ENCODE measurements at regions of chr3 and their contacts with region 1.

Region 1: GRCh38 chr3:126752303-126752842 is 48.3 kb downstream of the CHCHD6 start:
- DNase-seq: peak; percentile 74
- ATAC-seq: peak; percentile 98
- H3K4me3 ChIP-seq: no peak overlapping the region
- H3K27ac ChIP-seq: no peak overlapping the region
- H3K4me1 ChIP-seq: no peaks in the 10 kb centered on the region
- H3K27me3 ChIP-seq: no peaks in the 10 kb centered on the region
- CTCF ChIP-seq: peak; percentile 85

Region 2: DNA sequence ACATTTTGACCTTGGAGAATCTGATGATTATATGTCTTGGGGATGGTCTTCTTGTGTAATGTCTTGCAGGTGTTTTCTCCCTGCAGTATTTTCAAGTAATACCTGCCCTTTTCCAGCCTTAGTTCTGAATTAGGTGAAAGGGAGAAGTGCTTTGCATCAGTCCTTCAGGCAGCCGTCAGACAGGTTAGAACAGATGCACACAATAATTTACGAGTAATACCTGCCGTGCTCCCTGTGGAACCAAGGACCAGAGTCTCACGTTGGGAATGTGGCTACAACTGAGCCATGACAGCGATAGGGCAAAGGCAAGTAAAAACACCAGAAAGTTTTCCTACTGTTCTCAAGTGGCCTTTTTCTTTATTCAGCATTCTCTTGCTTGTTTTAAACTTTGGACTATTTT is 20.8 kb after region 1 on chr3:
- CTCF ChIA-PET with region 1: interaction called, 16 read pairs
- POLR2A ChIA-PET with region 1: no interaction called
- intact Hi-C with region 1: no loop called
- DNase-seq: peak; percentile 57
- ATAC-seq: peak; percentile 42
- H3K4me3 ChIP-seq: no peak overlapping the region
- H3K27ac ChIP-seq: peak overlapping the region; percentile 59
- H3K4me1 ChIP-seq: peaks cover 25% of the 10 kb centered on the region
- H3K27me3 ChIP-seq: no peaks in the 10 kb centered on the region
- CTCF ChIP-seq: no peak

Region 3: DNA sequence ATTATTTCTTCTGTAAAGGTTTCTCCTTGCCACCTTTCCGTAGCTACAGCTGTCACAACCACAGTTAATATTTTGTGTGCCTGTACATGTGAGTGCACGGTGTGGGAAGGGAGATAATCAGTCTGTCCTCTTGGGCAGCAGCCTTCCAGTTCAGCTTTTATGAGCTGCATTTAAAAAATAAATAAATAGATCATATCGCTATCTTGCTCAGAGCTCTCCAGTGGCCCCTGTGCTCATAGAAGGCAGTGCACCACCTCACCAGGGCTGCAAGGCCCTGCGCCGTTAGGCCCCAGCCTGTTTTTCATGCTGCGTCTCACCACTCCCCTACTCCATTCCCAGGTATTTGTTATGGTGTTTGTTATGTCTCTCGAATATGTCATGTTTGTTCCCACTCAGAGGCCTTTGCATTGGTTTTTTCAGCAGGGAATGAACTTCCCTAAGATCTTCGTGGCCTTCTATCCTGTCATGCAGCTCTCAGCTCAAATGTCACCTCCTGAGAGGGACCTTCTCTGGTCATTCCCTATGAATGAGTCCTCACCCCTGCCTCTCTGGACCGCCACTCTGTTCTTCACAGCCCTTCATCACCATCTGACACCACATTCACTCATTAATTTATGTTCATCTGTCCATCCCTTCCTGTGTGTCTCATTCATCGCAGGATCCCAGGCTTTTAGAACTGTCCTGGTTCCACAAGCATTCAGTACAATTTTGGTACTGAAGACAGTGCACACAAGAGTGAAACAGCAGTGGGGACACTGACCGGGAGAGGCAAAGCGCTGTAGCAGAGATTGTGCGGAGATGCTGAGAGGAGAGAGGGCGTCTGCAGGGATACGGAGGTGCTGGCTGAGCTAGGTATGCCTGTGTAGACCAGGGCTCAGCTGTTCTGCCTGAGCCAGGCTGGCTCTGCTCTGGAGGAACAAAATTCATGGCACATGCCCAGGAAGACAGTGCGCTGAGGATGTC is 83.8 kb after region 1 on chr3:
- CTCF ChIA-PET with region 1: no interaction called
- POLR2A ChIA-PET with region 1: no interaction called
- intact Hi-C with region 1: loop called (anchors 5 kb)
- DNase-seq: peak; percentile 7
- ATAC-seq: peak; percentile 72
- H3K4me3 ChIP-seq: no peak overlapping the region
- H3K27ac ChIP-seq: peak overlapping the region; percentile 61
- H3K4me1 ChIP-seq: peaks cover 17% of the 10 kb centered on the region
- H3K27me3 ChIP-seq: no peaks in the 10 kb centered on the region
- CTCF ChIP-seq: no peak

Region 4: GRCh38 chr3:126886217-126886616 is 133.8 kb after region 1 on chr3:
- CTCF ChIA-PET with region 1: no interaction called
- POLR2A ChIA-PET with region 1: no interaction called
- intact Hi-C with region 1: no loop called
- DNase-seq: no peak
- ATAC-seq: peak; percentile 94
- H3K4me3 ChIP-seq: no peak overlapping the region
- H3K27ac ChIP-seq: no peak overlapping the region
- H3K4me1 ChIP-seq: no peaks in the 10 kb centered on the region
- H3K27me3 ChIP-seq: no peaks in the 10 kb centered on the region
- CTCF ChIP-seq: no peak

Region 5: GRCh38 chr3:126961191-126961790 is 208.9 kb after region 1 on chr3:
- CTCF ChIA-PET with region 1: no interaction called
- POLR2A ChIA-PET with region 1: no interaction called
- intact Hi-C with region 1: loop called (anchors 2 kb)
- DNase-seq: peak; percentile 75
- ATAC-seq: peak; percentile 67
- H3K4me3 ChIP-seq: no peak overlapping the region
- H3K27ac ChIP-seq: peak overlapping the region; percentile 89
- H3K4me1 ChIP-seq: peaks cover 37% of the 10 kb centered on the region
- H3K27me3 ChIP-seq: no peaks in the 10 kb centered on the region
- CTCF ChIP-seq: no peak

Region 6: GRCh38 chr3:126982471-126983175 is 230.2 kb after region 1 on chr3 and contains the start of gene PLXNA1:
- CTCF ChIA-PET with region 1: interaction called, 5 read pairs
- POLR2A ChIA-PET with region 1: no interaction called
- intact Hi-C with region 1: loop called (anchors 2 kb)
- DNase-seq: peak; percentile 77
- ATAC-seq: peak; percentile 74
- H3K4me3 ChIP-seq: peak within 1 kb of the TSS; percentile 83
- H3K27ac ChIP-seq: peak within 1 kb of the TSS; percentile 30; the same call in 1 of the 2 replicates
- H3K4me1 ChIP-seq: peaks cover 7% of the 10 kb centered on the region
- H3K27me3 ChIP-seq: no peaks in the 10 kb centered on the region
- CTCF ChIP-seq: peak; percentile 71
- total RNA-seq, gene PLXNA1: 30.0 and 38.0 TPM in 2 replicates

Region 7: GRCh38 chr3:127172781-127173515 is 420.6 kb after region 1 on chr3:
- CTCF ChIA-PET with region 1: no interaction called
- POLR2A ChIA-PET with region 1: no interaction called
- intact Hi-C with region 1: loop called (anchors 10 kb)
- DNase-seq: peak; percentile 38
- ATAC-seq: peak; percentile 37
- H3K4me3 ChIP-seq: no peak overlapping the region
- H3K27ac ChIP-seq: no peak overlapping the region
- H3K4me1 ChIP-seq: peaks cover 4% of the 10 kb centered on the region; the same call in 1 of the 2 replicates
- H3K27me3 ChIP-seq: peaks cover 23% of the 10 kb centered on the region
- CTCF ChIP-seq: no peak

Measured in PC-3 (cell line).